ENCODE measurements at regions of chr2 and their contacts with region 1.

Region 1: DNA sequence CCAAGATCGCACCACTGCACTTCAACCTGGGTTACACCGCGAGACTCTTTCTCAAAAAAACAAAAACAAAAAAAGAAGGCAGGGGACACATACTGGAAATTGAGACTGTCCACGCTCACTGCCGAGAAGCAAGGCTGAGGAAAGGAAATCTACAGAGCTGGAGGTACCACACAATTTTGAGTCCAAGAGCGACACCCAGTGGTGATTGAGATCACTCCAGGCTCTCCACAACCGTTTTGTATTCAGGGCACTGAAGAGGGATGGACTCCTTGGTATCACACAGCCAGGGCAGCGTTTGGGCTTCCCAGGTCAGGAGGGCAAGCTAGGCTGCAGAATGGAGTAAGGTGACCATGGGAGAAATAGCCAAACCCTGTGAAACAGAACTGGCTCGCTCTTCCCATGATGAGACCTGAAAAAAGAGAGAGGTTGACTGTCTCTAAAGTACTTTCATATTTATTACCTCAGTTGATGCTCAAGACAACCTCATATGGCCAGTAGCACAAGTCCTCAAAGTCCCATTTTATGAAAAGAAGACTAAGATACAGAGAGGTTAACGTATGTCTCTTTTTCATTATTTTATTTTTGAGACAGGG is 74.5 kb upstream of the YPEL5 start:
- DNase-seq: peak in 8 of 9 experiments; percentile 25 to 72 (median 53)
- ATAC-seq: peak; percentile 85
- H3K4me3 ChIP-seq: no peak overlapping the region
- H3K4me3 Mint-ChIP-seq: no peak overlapping the region
- H3K27ac ChIP-seq: no peak overlapping the region
- H3K27ac Mint-ChIP-seq: no peak overlapping the region
- H3K4me1 ChIP-seq: no peaks in the 10 kb centered on the region
- H3K4me1 Mint-ChIP-seq: no peaks in the 10 kb centered on the region
- H3K27me3 ChIP-seq: no peaks in the 10 kb centered on the region
- H3K27me3 Mint-ChIP-seq: peaks cover 53% of the 10 kb centered on the region
- CTCF ChIP-seq: peak; percentile 57

Region 2: GRCh38 chr2:29182931-29183330 is 889.4 kb before region 1 on chr2:
- CTCF ChIA-PET with region 1: no interaction called
- POLR2A ChIA-PET with region 1: no interaction called
- intact Hi-C with region 1: no loop called
- DNase-seq: no peak
- ATAC-seq: no peak
- H3K4me3 ChIP-seq: no peak overlapping the region
- H3K4me3 Mint-ChIP-seq: no peak overlapping the region
- H3K27ac ChIP-seq: no peak overlapping the region
- H3K27ac Mint-ChIP-seq: no peak overlapping the region
- H3K4me1 ChIP-seq: no peaks in the 10 kb centered on the region
- H3K4me1 Mint-ChIP-seq: no peaks in the 10 kb centered on the region
- H3K27me3 ChIP-seq: no peaks in the 10 kb centered on the region
- H3K27me3 Mint-ChIP-seq: no peaks in the 10 kb centered on the region
- CTCF ChIP-seq: no peak

Region 3: DNA sequence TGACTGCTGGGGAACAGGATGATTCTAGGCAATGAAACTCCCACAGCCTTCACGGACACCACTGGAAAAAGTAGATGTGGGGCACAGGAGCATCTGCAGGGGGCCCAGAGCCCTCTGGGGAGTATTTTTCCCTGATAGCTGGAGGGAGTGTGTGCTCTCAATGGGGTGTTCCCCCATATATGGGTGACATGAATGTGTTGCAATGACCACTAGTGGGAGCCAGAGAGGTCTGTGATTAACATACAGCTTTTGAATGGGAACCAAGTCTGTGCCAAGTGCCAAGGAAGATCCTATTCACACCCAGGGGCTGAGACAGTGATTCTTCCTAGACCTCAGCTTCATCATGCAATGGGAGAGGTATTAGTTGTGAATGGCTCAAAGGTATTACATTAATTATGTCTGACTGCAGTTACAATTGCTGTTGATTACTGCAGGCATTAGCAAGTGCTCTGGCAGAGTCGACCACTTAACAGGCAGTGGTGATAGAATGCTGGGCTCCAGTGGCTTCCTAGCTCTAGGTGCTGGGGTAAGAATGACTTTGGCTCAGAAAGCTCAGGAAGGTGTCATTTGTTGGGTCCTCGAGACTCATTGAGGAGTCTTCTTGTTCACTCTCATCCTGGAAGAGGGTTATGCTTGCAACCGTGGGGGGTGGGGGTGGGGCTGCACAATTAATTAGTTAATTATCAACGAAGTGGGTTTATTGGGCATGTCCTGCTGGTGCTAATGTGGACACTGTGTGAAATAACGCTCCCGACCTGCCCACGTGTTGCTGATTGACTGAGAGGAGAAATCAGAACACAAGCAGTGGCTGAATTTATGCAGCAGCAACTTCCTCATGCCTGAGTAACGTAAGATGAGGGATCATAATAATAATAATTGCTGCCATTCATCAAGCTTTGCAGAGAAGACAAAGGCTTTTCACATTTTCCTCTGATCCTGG is 763.0 kb before region 1 on chr2:
- CTCF ChIA-PET with region 1: no interaction called
- POLR2A ChIA-PET with region 1: no interaction called
- intact Hi-C with region 1: loop called in 1 of 2 experiments (anchors 5 kb)
- DNase-seq: peak in 7 of 9 experiments; percentile 10 to 67 (median 35)
- ATAC-seq: peak; percentile 40
- H3K4me3 ChIP-seq: no peak overlapping the region
- H3K4me3 Mint-ChIP-seq: no peak overlapping the region
- H3K27ac ChIP-seq: no peak overlapping the region
- H3K27ac Mint-ChIP-seq: no peak overlapping the region
- H3K4me1 ChIP-seq: peaks cover 4% of the 10 kb centered on the region
- H3K4me1 Mint-ChIP-seq: peaks cover 11% of the 10 kb centered on the region
- H3K27me3 ChIP-seq: no peaks in the 10 kb centered on the region
- H3K27me3 Mint-ChIP-seq: peaks cover 24% of the 10 kb centered on the region
- CTCF ChIP-seq: peak; percentile 59

Region 4: GRCh38 chr2:29855924-29856639 is 216.3 kb before region 1 on chr2:
- CTCF ChIA-PET with region 1: no interaction called
- POLR2A ChIA-PET with region 1: no interaction called
- intact Hi-C with region 1: no loop called
- DNase-seq: no peak
- ATAC-seq: no peak
- H3K4me3 ChIP-seq: no peak overlapping the region
- H3K4me3 Mint-ChIP-seq: no peak overlapping the region
- H3K27ac ChIP-seq: no peak overlapping the region
- H3K27ac Mint-ChIP-seq: no peak overlapping the region
- H3K4me1 ChIP-seq: no peaks in the 10 kb centered on the region
- H3K4me1 Mint-ChIP-seq: no peaks in the 10 kb centered on the region
- H3K27me3 ChIP-seq: no peaks in the 10 kb centered on the region
- H3K27me3 Mint-ChIP-seq: peaks cover 39% of the 10 kb centered on the region
- CTCF ChIP-seq: no peak

Region 5: GRCh38 chr2:29923110-29923721 is 149.1 kb before region 1 on chr2:
- CTCF ChIA-PET with region 1: interaction called, 6 read pairs
- POLR2A ChIA-PET with region 1: no interaction called
- intact Hi-C with region 1: loop called in 1 of 2 experiments (anchors 2 kb)
- DNase-seq: peak in 8 of 9 experiments; percentile 11 to 59 (median 39)
- ATAC-seq: no peak
- H3K4me3 ChIP-seq: no peak overlapping the region
- H3K4me3 Mint-ChIP-seq: no peak overlapping the region
- H3K27ac ChIP-seq: no peak overlapping the region
- H3K27ac Mint-ChIP-seq: no peak overlapping the region
- H3K4me1 ChIP-seq: peaks cover 6% of the 10 kb centered on the region
- H3K4me1 Mint-ChIP-seq: peaks cover 23% of the 10 kb centered on the region
- H3K27me3 ChIP-seq: peaks cover 15 to 20% of the 10 kb centered on the region in 2 experiments
- H3K27me3 Mint-ChIP-seq: peaks cover 56% of the 10 kb centered on the region
- CTCF ChIP-seq: peak; percentile 96

Region 6: GRCh38 chr2:30030361-30030760 is 42.0 kb before region 1 on chr2:
- CTCF ChIA-PET with region 1: no interaction called
- POLR2A ChIA-PET with region 1: no interaction called
- intact Hi-C with region 1: no loop called
- DNase-seq: no peak
- ATAC-seq: no peak
- H3K4me3 ChIP-seq: no peak overlapping the region
- H3K4me3 Mint-ChIP-seq: no peak overlapping the region
- H3K27ac ChIP-seq: no peak overlapping the region
- H3K27ac Mint-ChIP-seq: no peak overlapping the region
- H3K4me1 ChIP-seq: no peaks in the 10 kb centered on the region
- H3K4me1 Mint-ChIP-seq: no peaks in the 10 kb centered on the region
- H3K27me3 ChIP-seq: peaks cover 0 to 3% of the 10 kb centered on the region in 2 experiments
- H3K27me3 Mint-ChIP-seq: peaks cover 25% of the 10 kb centered on the region
- CTCF ChIP-seq: no peak

Region 7: DNA sequence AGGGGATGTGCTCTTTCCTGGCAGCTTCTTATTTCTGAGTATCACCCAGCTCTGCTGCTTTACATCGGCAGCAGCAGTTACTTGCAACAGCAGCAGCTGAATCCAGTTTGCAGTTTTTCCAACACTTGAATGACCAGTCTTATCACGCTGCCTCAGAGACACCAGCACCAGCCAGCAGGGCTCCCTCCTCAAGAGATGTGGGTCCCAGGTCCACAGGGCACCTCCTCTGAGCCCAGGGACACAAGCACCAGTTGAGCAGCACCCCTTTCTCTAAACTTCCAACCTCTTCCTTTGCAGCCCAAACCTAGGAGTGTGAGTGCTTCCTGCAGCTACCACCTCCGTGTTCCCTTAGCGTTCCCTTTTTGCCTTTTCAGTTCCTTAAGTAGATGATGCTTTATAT is 24.1 kb after region 1 on chr2:
- CTCF ChIA-PET with region 1: no interaction called
- POLR2A ChIA-PET with region 1: no interaction called
- intact Hi-C with region 1: no loop called
- DNase-seq: no peak
- ATAC-seq: no peak
- H3K4me3 ChIP-seq: no peak overlapping the region
- H3K4me3 Mint-ChIP-seq: no peak overlapping the region
- H3K27ac ChIP-seq: no peak overlapping the region
- H3K27ac Mint-ChIP-seq: no peak overlapping the region
- H3K4me1 ChIP-seq: no peaks in the 10 kb centered on the region
- H3K4me1 Mint-ChIP-seq: no peaks in the 10 kb centered on the region
- H3K27me3 ChIP-seq: peaks cover 0 to 2% of the 10 kb centered on the region in 2 experiments
- H3K27me3 Mint-ChIP-seq: peaks cover 25% of the 10 kb centered on the region
- CTCF ChIP-seq: no peak

Measured in CD8-positive, alpha-beta T cell (primary cell).